Calu3 (cell line): ENCODE measurements at regions of chr4 and their contacts with region 1.

Region 1: DNA sequence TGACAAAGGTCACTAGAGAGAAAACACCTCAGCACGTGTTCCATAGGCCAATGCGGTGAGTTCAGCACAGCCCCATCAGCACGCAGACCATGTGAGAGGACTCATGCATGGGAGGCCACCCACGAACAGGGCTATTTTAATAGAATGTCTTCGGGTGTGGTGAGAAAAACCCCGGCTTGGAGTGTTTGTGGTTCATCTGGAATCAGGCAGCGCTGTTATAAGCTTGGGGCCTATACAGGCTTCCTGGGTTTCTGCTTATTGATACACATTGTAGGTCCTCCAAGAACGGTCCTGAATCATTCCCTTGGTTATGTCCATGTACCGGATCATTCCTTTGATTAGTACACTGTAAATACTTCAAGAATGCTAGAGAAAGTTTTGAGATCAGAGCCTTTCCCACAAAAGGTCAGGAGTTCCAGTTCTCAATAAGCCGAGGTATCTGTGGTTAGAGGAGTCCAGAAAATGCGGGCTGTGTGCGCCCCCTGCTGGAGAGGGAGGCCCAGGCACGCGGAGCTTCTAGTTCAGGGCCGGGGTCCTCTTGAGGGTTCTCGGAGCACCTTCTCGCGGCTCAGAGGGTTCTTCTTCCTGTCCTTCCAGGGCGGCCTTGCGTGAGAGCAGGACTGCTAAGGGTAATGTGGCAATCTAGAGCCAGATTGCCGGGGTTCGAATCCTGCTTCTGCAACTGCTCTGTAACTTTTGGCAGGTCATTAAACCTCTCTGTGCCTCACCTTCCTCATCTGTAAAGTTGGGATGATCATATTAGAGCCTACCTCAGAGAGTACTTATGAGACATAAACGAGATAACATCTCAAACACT is 51.8 kb downstream of the TLR10 start:
- DNase-seq: peak; percentile 85
- H3K4me3 Mint-ChIP-seq: no peak overlapping the region
- H3K27ac Mint-ChIP-seq: no peak overlapping the region
- H3K4me1 Mint-ChIP-seq: peaks cover 25% of the 10 kb centered on the region
- H3K27me3 Mint-ChIP-seq: no peaks in the 10 kb centered on the region
- CTCF ChIP-seq: peak; percentile 83

Region 2: DNA sequence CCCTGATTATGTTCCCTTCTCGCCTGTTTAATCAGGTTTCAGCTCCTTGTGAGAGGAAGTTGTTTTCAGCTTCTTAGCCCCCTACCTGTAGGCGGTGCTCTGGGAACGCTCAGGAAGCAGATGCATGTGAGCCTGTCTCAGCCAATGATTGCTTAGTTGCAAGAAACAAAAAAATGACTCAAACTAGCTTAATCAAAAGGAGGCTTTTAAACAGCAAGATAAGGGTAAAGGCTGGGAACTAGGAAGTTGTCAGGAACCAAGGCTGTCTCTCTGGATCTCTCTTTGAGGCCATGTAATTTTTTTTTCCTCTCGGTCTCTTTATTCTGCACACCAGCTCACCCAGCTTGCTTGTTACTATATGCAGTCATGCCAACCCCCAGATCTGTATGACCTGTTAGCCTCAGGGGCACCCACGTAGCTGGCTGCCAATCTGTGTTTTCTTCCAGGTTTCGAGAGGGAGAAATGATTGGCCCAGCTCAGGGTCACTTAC is 661.7 kb before region 1 on chr4:
- CTCF ChIA-PET with region 1: interaction called, 15 read pairs
- intact Hi-C with region 1: no loop called
- DNase-seq: peak; percentile 64
- H3K4me3 Mint-ChIP-seq: no peak overlapping the region
- H3K27ac Mint-ChIP-seq: no peak overlapping the region
- H3K4me1 Mint-ChIP-seq: peaks cover 8% of the 10 kb centered on the region
- H3K27me3 Mint-ChIP-seq: no peaks in the 10 kb centered on the region
- CTCF ChIP-seq: peak; percentile 28

Region 3: GRCh38 chr4:38160487-38161207 is 570.4 kb before region 1 on chr4:
- CTCF ChIA-PET with region 1: no interaction called
- intact Hi-C with region 1: loop called (anchors 5 kb)
- DNase-seq: peak; percentile 62
- H3K4me3 Mint-ChIP-seq: peak overlapping the region; percentile 10
- H3K27ac Mint-ChIP-seq: peak overlapping the region; percentile 93
- H3K4me1 Mint-ChIP-seq: peaks cover 67% of the 10 kb centered on the region
- H3K27me3 Mint-ChIP-seq: no peaks in the 10 kb centered on the region
- CTCF ChIP-seq: no peak

Region 4: GRCh38 chr4:38319456-38320342 is 411.3 kb before region 1 on chr4:
- CTCF ChIA-PET with region 1: interaction called, 7 read pairs
- intact Hi-C with region 1: loop called (anchors 1 kb)
- DNase-seq: peak; percentile 92
- H3K4me3 Mint-ChIP-seq: no peak overlapping the region
- H3K27ac Mint-ChIP-seq: peak overlapping the region; percentile 77
- H3K4me1 Mint-ChIP-seq: peaks cover 51% of the 10 kb centered on the region
- H3K27me3 Mint-ChIP-seq: no peaks in the 10 kb centered on the region
- CTCF ChIP-seq: peak; percentile 85

Region 5: GRCh38 chr4:38620790-38621684 is 110.0 kb before region 1 on chr4:
- CTCF ChIA-PET with region 1: interaction called, 3 read pairs
- intact Hi-C with region 1: loop called (anchors 2 kb)
- DNase-seq: peak; percentile 62
- H3K4me3 Mint-ChIP-seq: no peak overlapping the region
- H3K27ac Mint-ChIP-seq: peak overlapping the region; percentile 83
- H3K4me1 Mint-ChIP-seq: peaks cover 44% of the 10 kb centered on the region
- H3K27me3 Mint-ChIP-seq: no peaks in the 10 kb centered on the region
- CTCF ChIP-seq: no peak

Region 6: GRCh38 chr4:38687571-38688011 is 43.4 kb before region 1 on chr4:
- CTCF ChIA-PET with region 1: interaction called, 6 read pairs
- intact Hi-C with region 1: loop called (anchors 2 kb)
- DNase-seq: peak; percentile 30
- H3K4me3 Mint-ChIP-seq: no peak overlapping the region
- H3K27ac Mint-ChIP-seq: peak overlapping the region; percentile 53
- H3K4me1 Mint-ChIP-seq: peaks cover 14% of the 10 kb centered on the region
- H3K27me3 Mint-ChIP-seq: no peaks in the 10 kb centered on the region
- CTCF ChIP-seq: no peak

Region 7: DNA sequence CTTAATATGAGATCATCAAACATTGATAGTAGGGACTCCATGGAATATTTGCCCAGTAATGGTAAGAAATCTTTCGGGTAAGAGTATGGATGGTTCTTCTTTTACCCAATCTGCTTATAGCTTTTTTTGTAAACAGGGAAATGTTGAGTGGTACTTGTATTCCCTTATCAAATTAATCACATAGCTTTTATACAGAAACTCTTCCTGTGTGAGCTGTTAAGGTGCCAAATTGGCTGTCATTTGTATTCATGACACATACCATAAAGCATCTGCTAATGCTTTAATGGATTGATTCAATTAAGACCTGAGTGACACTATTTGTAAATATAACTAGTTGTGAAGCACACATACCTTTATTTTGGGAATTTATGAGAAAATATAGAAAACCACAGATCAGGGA is 32.9 kb before region 1 on chr4:
- CTCF ChIA-PET with region 1: no interaction called
- intact Hi-C with region 1: no loop called
- DNase-seq: no peak
- H3K4me3 Mint-ChIP-seq: no peak overlapping the region
- H3K27ac Mint-ChIP-seq: peak overlapping the region; percentile 47
- H3K4me1 Mint-ChIP-seq: peaks cover 19% of the 10 kb centered on the region
- H3K27me3 Mint-ChIP-seq: no peaks in the 10 kb centered on the region
- CTCF ChIP-seq: no peak